Esophagus squamous epithelium (tissue), 5 donors: ENCODE measurements at regions of chr15 and their contacts with region 1.

Region 1: DNA sequence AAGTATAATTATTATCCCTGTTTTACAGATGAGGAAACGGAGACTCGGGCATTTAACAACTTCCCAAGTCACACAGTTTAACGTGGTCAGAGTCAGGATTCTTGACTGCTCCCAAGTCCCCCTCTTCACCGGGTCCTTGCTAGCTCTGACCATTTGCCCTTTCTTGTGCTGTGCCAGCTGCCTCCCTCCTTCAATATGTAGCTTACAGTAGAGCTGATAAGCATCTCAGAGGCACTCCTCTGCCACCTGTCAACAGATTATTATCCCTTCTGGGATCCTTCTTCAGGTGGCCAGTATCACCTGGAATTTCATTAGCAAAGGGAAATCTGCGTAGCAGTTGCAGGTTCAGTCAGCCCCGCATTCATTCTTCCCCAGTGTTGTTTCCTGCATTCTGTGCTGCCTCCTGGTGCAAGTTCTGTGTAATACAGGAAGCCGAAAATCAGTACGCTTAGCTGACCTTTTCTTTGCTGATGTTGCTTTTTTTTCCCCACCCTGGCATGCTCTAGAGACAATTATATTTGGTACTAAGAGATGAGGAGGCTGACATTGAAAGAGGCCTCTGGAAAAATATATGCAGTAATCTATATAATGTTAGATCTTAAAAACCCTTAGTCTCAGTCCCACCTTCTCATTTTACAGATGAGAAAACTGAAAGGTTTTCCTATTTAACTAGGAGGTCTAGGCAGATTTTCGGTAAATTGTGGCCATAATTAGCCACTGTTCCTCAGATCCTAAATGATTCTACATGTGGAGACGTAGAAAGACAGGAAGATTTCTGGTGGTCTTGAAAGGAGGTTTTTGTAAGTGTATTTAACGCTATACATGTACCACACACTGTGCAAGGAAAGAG is 24.8 kb downstream of the TMOD2 start:
- DNase-seq: no peak
- H3K4me3 ChIP-seq: no peak overlapping the region
- H3K27ac ChIP-seq: peak overlapping the region in 2 of 4 donors; percentile 42 to 49
- H3K4me1 ChIP-seq: peaks cover 0 to 21% (median 5%) of the 10 kb centered on the region in 3 donors
- H3K27me3 ChIP-seq: no peaks in the 10 kb centered on the region
- CTCF ChIP-seq: peak; percentile 68 to 86 (median 78)
- POLR2A ChIP-seq: no peak

Region 2: DNA sequence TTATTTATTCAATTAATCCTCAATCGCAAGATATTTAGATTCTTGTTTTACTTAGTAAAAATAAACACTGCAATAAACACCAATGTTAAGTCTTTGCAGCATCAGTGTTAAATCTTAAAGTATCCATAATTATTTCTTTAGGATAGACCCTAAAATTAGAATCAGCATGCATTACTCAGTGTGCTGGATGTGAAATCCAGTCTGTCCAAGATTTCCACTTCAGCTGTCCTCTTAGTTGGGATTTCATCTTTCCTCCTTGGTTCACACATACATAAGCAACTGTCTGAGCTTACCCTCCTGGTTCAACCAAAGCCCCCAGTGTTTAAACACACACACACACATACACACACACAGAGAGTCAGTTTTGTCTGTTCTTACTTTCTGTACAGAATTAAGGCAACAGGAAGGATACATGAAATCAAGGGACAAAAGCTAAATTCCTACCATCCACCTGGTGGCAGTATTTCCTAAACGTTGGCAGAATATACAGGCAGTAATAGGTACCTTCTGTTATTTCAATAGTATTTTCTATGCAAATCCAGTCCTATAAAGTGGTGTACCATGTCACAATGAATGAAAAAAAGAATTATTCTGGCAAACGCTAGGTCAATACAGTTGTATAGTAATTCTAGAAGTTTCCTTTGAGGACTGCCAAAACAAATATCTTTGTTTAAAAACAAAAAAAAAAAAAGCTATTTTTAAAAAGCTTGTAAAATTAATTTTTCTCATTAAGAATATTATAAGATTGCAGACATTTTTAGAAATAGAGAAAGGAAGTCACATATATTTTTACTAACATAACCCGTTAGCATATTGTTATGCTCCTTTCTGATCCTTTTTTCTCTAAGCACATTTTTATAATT is 126.3 kb before region 1 on chr15:
- intact Hi-C with region 1: loop called (anchors 2 kb)
- DNase-seq: no peak
- H3K4me3 ChIP-seq: no peak overlapping the region
- H3K27ac ChIP-seq: no peak overlapping the region
- H3K4me1 ChIP-seq: no peaks in the 10 kb centered on the region
- H3K27me3 ChIP-seq: no peaks in the 10 kb centered on the region
- CTCF ChIP-seq: peak; percentile 58 to 84 (median 72)
- POLR2A ChIP-seq: no peak

Region 3: DNA sequence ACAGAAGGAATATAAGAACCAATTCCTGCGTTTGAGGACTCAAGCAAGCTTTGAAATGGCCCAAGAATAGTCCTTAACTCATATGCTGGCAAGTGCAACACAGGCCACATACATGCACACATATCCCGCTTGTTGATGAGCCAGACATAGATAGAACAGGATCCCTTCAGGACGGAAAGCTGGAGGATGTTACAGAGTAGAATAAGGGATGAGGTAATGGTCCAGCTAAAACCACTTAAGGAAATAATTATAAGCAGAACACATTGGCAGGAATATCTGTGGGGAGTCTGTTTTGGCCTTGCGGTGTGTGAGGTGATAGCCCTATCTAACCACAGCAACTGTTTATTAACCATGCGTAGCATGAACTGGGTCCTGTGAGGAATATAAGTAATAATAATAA is 69.9 kb before region 1 on chr15:
- intact Hi-C with region 1: no loop called
- DNase-seq: no peak
- H3K4me3 ChIP-seq: no peak overlapping the region
- H3K27ac ChIP-seq: peak overlapping the region in 1 of 4 donors; percentile 29
- H3K4me1 ChIP-seq: peaks cover 0 to 5% (median 0%) of the 10 kb centered on the region in 3 donors
- H3K27me3 ChIP-seq: no peaks in the 10 kb centered on the region
- CTCF ChIP-seq: no peak
- POLR2A ChIP-seq: no peak

Region 4: GRCh38 chr15:51874751-51875528 is 98.7 kb after region 1 on chr15:
- intact Hi-C with region 1: no loop called
- DNase-seq: no peak
- H3K4me3 ChIP-seq: no peak overlapping the region
- H3K27ac ChIP-seq: peak overlapping the region; percentile 85 to 92 (median 91)
- H3K4me1 ChIP-seq: peaks cover 9 to 64% (median 24%) of the 10 kb centered on the region in 3 donors
- H3K27me3 ChIP-seq: no peaks in the 10 kb centered on the region
- CTCF ChIP-seq: no peak
- POLR2A ChIP-seq: no peak

Region 5: DNA sequence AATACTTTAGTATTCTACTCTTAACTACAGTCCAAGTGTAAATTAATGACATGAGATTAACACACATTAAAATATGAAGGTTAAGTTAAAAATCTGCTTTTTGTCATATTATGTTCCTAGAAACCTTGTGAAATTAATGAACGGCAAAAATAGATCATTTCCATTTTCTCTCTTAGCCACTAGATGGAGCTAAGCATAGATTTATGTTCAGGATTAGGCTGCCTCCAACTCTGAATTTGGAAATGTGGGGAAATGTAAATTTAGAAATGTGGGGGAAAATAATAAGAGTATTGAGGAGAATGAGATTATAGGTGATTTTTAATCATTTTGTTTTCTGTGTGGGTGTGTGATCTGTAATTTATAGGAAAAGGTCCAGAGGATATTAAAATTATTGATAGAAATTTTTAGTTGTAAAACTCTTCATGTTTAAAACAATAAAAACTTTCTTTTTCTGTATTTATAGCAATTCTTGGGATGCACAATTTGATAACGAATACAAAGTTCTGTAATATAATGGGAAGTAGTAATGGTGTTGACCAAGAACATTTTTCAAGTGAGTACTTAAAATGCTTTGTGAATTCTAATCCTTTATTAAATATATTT is 112.5 kb after region 1 on chr15:
- intact Hi-C with region 1: no loop called
- DNase-seq: no peak
- H3K4me3 ChIP-seq: no peak overlapping the region
- H3K27ac ChIP-seq: peak overlapping the region in 1 of 4 donors; percentile 10
- H3K4me1 ChIP-seq: peaks cover 4 to 22% (median 4%) of the 10 kb centered on the region in 3 donors
- H3K27me3 ChIP-seq: no peaks in the 10 kb centered on the region
- CTCF ChIP-seq: peak; percentile 43 to 80 (median 64)
- POLR2A ChIP-seq: no peak